Natural killer cell (primary cell): ENCODE measurements at regions of chr10 and their contacts with region 1.

Region 1: GRCh38 chr10:84352251-84352842 is 24.0 kb downstream of the CCSER2 start:
- DNase-seq: peak; percentile 58 to 86
- ATAC-seq: peak; percentile 83 to 87 (median 86)
- H3K4me3 ChIP-seq: no peak overlapping the region
- H3K4me3 Mint-ChIP-seq: no peak overlapping the region
- H3K27ac ChIP-seq: no peak overlapping the region
- H3K27ac Mint-ChIP-seq: peak overlapping the region; percentile 39 to 51
- H3K4me1 ChIP-seq: peaks cover 28% of the 10 kb centered on the region
- H3K4me1 Mint-ChIP-seq: peaks cover 64 to 70% of the 10 kb centered on the region in 2 donors
- H3K27me3 ChIP-seq: no peaks in the 10 kb centered on the region
- H3K27me3 Mint-ChIP-seq: no peaks in the 10 kb centered on the region
- CTCF ChIP-seq: peak; percentile 76

Region 2: GRCh38 chr10:84264611-84265141 is 87.7 kb before region 1 on chr10:
- intact Hi-C with region 1: loop called (anchors 5 kb)
- DNase-seq: peak; percentile 62 to 85
- ATAC-seq: peak; percentile 84 to 98 (median 96)
- H3K4me3 ChIP-seq: no peak overlapping the region
- H3K4me3 Mint-ChIP-seq: no peak overlapping the region
- H3K27ac ChIP-seq: no peak overlapping the region
- H3K27ac Mint-ChIP-seq: no peak overlapping the region
- H3K4me1 ChIP-seq: peaks cover 5% of the 10 kb centered on the region
- H3K4me1 Mint-ChIP-seq: peaks cover 12 to 16% of the 10 kb centered on the region in 2 donors
- H3K27me3 ChIP-seq: no peaks in the 10 kb centered on the region
- H3K27me3 Mint-ChIP-seq: peaks cover 25 to 33% of the 10 kb centered on the region in 2 donors
- CTCF ChIP-seq: peak; percentile 97

Region 3: GRCh38 chr10:84317174-84317573 is 35.2 kb before region 1 on chr10:
- intact Hi-C with region 1: no loop called
- DNase-seq: no peak
- ATAC-seq: no peak
- H3K4me3 ChIP-seq: no peak overlapping the region
- H3K4me3 Mint-ChIP-seq: no peak overlapping the region
- H3K27ac ChIP-seq: no peak overlapping the region
- H3K27ac Mint-ChIP-seq: no peak overlapping the region
- H3K4me1 ChIP-seq: no peaks in the 10 kb centered on the region
- H3K4me1 Mint-ChIP-seq: no peaks in the 10 kb centered on the region
- H3K27me3 ChIP-seq: no peaks in the 10 kb centered on the region
- H3K27me3 Mint-ChIP-seq: peaks cover 5 to 12% of the 10 kb centered on the region in 2 donors
- CTCF ChIP-seq: no peak

Region 4: DNA sequence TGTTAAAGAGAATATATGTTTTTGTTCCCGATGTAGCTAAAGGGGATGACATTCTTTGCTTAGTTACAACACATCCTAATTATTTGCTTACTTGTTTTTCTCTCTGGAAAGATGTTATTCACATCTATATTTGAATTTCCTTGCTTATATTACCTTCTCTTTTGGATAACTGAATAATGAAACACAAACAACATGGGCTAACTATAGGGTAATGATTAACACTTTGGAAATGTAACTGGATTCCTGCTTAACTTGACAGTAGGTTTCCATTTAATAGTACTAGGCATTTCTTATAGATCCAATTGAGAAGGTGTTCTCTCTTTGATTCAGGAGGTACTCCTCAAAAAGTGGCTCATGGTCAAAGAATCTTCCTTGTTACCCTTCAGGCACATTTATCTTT is 117.1 kb after region 1 on chr10:
- intact Hi-C with region 1: no loop called
- DNase-seq: no peak
- ATAC-seq: no peak
- H3K4me3 ChIP-seq: no peak overlapping the region
- H3K4me3 Mint-ChIP-seq: no peak overlapping the region
- H3K27ac ChIP-seq: no peak overlapping the region
- H3K27ac Mint-ChIP-seq: no peak overlapping the region
- H3K4me1 ChIP-seq: no peaks in the 10 kb centered on the region
- H3K4me1 Mint-ChIP-seq: peaks cover 16 to 18% of the 10 kb centered on the region in 2 donors
- H3K27me3 ChIP-seq: no peaks in the 10 kb centered on the region
- H3K27me3 Mint-ChIP-seq: no peaks in the 10 kb centered on the region
- CTCF ChIP-seq: no peak